ENCODE measurements at regions of chr1 and their contacts with region 1.

Region 1: GRCh38 chr1:149886396-149887195 is 12.8 kb upstream of the BOLA1 start:
- DNase-seq: peak; percentile 98
- ATAC-seq: peak; percentile 73
- H3K4me3 ChIP-seq: peak overlapping the region; percentile 84 to 97 (median 92)
- H3K4me3 Mint-ChIP-seq: no peak overlapping the region
- H3K27ac ChIP-seq: peak overlapping the region; percentile 89 to 94
- H3K27ac Mint-ChIP-seq: no peak overlapping the region
- H3K4me1 ChIP-seq: peaks cover 23 to 33% of the 10 kb centered on the region in 2 donors
- H3K4me1 Mint-ChIP-seq: peaks cover 11% of the 10 kb centered on the region
- H3K27me3 ChIP-seq: no peaks in the 10 kb centered on the region
- H3K27me3 Mint-ChIP-seq: no peaks in the 10 kb centered on the region
- CTCF ChIP-seq: no peak

Region 2: GRCh38 chr1:149844101-149844500 is 42.5 kb before region 1 on chr1:
- CTCF ChIA-PET with region 1: interaction called, 5 read pairs
- POLR2A ChIA-PET with region 1: interaction called, 51 read pairs
- intact Hi-C with region 1: no loop called
- DNase-seq: peak; percentile 6
- ATAC-seq: no peak
- H3K4me3 ChIP-seq: peak overlapping the region; percentile 43 to 83 (median 79)
- H3K4me3 Mint-ChIP-seq: peak overlapping the region; percentile 94
- H3K27ac ChIP-seq: peak overlapping the region; percentile 30 to 71
- H3K27ac Mint-ChIP-seq: peak overlapping the region; percentile 89
- H3K4me1 ChIP-seq: peaks cover 47 to 49% of the 10 kb centered on the region in 2 donors
- H3K4me1 Mint-ChIP-seq: peaks cover 48% of the 10 kb centered on the region
- H3K27me3 ChIP-seq: no peaks in the 10 kb centered on the region
- H3K27me3 Mint-ChIP-seq: no peaks in the 10 kb centered on the region
- CTCF ChIP-seq: no peak

Region 3: DNA sequence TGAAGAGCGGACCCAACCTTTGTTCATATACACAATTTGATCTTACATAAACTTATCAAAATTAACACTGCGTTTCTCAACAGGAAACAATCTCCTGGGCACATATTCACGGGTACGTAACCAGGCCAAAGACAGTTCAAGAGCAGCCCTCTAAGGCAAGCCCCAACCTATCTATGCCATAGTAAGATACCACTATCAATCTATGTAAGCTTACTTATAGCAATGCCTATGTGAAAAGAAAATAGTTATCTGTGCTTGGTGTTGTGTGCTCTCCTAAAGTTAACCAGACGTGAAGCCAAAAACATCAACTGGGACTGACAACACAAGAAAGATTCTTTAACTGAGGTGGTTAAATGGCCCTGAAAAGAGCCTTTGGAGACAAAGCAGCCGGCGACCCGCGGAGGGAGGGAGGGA is 36.6 kb before region 1 on chr1:
- CTCF ChIA-PET with region 1: interaction called, 5 read pairs
- POLR2A ChIA-PET with region 1: interaction called, 51 read pairs
- intact Hi-C with region 1: no loop called
- DNase-seq: peak; percentile 46
- ATAC-seq: no peak
- H3K4me3 ChIP-seq: peak overlapping the region; percentile 56 to 98 (median 70)
- H3K4me3 Mint-ChIP-seq: peak overlapping the region; percentile 95
- H3K27ac ChIP-seq: peak overlapping the region; percentile 59 to 81
- H3K27ac Mint-ChIP-seq: peak overlapping the region; percentile 94
- H3K4me1 ChIP-seq: peaks cover 43% of the 10 kb centered on the region in 2 donors
- H3K4me1 Mint-ChIP-seq: peaks cover 45% of the 10 kb centered on the region
- H3K27me3 ChIP-seq: no peaks in the 10 kb centered on the region
- H3K27me3 Mint-ChIP-seq: no peaks in the 10 kb centered on the region
- CTCF ChIP-seq: no peak

Region 4: DNA sequence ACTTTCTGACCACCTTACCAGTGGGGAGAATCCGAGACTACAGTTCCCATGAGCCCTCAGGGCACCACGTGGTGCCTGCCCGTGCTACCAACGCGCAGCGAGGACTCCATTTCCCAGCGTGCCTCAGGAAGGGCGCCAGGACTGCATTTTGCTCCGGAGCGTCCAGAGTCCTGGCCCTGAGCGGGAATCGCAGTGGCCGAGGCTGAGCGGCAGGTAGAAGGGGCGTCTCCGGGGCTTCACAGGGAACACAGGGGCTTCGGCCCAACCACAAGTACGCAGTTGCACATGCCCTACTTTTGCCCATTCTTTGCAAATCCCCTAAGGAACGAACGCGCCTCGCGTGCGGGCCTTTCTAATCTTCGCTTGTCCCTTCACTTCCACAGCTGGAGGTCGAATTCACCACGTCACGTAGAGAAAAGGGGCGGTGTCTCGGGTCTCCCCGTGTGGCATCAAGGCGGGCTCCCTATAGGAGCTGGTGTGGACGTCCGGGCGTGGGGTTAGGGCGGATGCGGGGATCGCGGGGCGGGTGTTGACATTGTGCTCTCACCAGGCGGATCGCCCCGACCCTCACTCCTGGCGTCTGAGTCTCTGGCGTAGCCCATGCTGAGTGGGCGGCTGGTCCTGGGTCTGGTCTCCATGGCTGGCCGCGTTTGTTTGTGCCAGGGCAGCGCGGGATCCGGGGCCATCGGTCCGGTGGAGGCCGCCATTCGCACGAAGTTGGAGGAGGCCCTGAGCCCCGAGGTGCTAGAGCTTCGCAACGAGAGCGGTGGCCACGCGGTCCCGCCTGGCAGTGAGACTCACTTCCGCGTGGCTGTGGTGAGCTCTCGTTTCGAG is 13.1 kb after region 1 on chr1 and contains the start of gene BOLA1:
- CTCF ChIA-PET with region 1: interaction called, 3 read pairs
- POLR2A ChIA-PET with region 1: interaction called, 25 read pairs
- intact Hi-C with region 1: loop called (anchors 1 kb)
- DNase-seq: peak; percentile 87
- ATAC-seq: peak; percentile 99
- H3K4me3 ChIP-seq: peak within 1 kb of the TSS; percentile 46 to 97 (median 80)
- H3K4me3 Mint-ChIP-seq: peak within 1 kb of the TSS; percentile 92
- H3K27ac ChIP-seq: peak within 1 kb of the TSS; percentile 49 to 67
- H3K27ac Mint-ChIP-seq: peak within 1 kb of the TSS; percentile 95
- H3K4me1 ChIP-seq: peaks cover 9 to 12% of the 10 kb centered on the region in 2 donors
- H3K4me1 Mint-ChIP-seq: peaks cover 15% of the 10 kb centered on the region
- H3K27me3 ChIP-seq: no peaks in the 10 kb centered on the region
- H3K27me3 Mint-ChIP-seq: no peaks in the 10 kb centered on the region
- CTCF ChIP-seq: no peak
- total RNA-seq, gene BOLA1: 15.9 and 16.7 TPM in 2 replicates

Region 5: DNA sequence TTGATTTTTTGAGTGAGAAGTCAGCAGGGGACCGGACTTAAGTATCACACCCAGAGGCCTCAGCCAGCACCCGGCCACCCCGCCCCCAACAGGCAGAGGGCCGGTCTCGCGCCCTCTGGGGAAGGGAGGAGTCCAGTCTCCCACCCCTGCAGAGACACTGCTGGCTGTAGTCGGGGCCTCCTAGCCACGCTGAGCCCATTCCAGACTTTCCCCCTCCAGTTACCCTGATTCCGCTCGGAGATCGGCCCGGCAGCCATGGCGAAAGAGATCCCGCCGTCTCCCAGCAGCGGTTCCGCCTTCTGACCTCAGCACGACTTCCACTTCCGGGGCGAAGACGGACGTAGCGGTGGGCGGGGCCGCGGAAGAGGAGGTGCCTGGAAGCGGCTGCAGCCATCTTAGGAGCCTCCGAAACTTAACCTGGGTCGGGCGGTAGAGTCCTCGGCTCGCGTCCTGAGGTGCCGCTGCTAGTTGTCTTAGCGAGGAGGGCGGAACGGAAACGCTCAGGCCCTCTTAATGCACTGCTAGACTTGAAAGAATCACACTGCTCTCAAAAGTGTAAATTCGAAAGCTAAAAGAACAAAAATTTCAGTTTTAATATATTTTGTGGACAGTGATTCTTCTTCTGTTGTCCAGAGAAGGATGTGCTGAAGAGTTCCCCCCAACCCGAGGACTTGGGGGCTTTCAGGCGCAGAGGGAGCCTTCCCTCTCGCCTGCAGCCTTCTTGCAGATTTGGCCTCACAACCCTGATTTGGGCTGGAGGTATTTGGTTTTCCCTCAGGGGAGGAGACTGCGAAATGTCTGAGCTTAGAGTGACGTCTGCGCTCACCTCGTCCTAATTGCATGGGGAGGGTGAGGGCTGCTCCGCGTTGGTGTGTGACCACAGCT is 41.1 kb after region 1 on chr1 and contains the start of gene SF3B4:
- CTCF ChIA-PET with region 1: interaction called, 7 read pairs
- POLR2A ChIA-PET with region 1: interaction called, 37 read pairs
- intact Hi-C with region 1: loop called (anchors 1 kb)
- DNase-seq: peak; percentile 96
- ATAC-seq: peak; percentile 95
- H3K4me3 ChIP-seq: peak within 1 kb of the TSS; percentile 76 to 98 (median 89)
- H3K4me3 Mint-ChIP-seq: peak within 1 kb of the TSS; percentile 98
- H3K27ac ChIP-seq: peak within 1 kb of the TSS; percentile 74 to 90
- H3K27ac Mint-ChIP-seq: peak within 1 kb of the TSS; percentile 97
- H3K4me1 ChIP-seq: peaks cover 17 to 24% of the 10 kb centered on the region in 2 donors
- H3K4me1 Mint-ChIP-seq: peaks cover 38% of the 10 kb centered on the region
- H3K27me3 ChIP-seq: peaks cover 0 to 2% (median 0%) of the 10 kb centered on the region in 4 experiments
- H3K27me3 Mint-ChIP-seq: peaks cover 20% of the 10 kb centered on the region
- CTCF ChIP-seq: no peak
- total RNA-seq, gene SF3B4: 59.7 and 60.1 TPM in 2 replicates

Region 6: GRCh38 chr1:150171801-150172200 is 285.2 kb after region 1 on chr1:
- CTCF ChIA-PET with region 1: no interaction called
- POLR2A ChIA-PET with region 1: no interaction called
- intact Hi-C with region 1: no loop called
- DNase-seq: no peak
- ATAC-seq: no peak
- H3K4me3 ChIP-seq: no peak overlapping the region
- H3K4me3 Mint-ChIP-seq: no peak overlapping the region
- H3K27ac ChIP-seq: no peak overlapping the region
- H3K27ac Mint-ChIP-seq: no peak overlapping the region
- H3K4me1 ChIP-seq: peaks cover 5 to 8% of the 10 kb centered on the region in 2 donors
- H3K4me1 Mint-ChIP-seq: peaks cover 5% of the 10 kb centered on the region
- H3K27me3 ChIP-seq: no peaks in the 10 kb centered on the region
- H3K27me3 Mint-ChIP-seq: no peaks in the 10 kb centered on the region
- CTCF ChIP-seq: no peak

Region 7: DNA sequence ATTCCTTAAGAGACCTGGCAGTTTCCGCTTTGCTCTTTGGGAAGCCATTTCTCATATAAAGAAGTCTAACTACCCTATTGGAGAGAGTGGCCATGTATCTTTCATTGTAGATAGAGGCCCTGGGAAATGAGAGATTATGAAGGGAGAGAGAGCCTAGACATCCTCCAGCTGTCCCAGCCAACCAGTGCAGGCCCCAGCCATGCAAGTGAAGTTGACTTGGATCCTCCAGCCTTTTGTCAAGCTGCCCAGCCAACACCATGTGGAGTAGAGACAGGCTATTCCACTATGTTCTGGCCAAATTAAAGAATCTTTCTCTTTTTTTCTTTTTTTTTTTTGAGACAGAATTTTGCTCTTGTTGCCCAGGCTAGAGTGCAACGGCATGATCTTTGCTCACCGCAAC is 356.4 kb after region 1 on chr1:
- CTCF ChIA-PET with region 1: no interaction called
- POLR2A ChIA-PET with region 1: no interaction called
- intact Hi-C with region 1: no loop called
- DNase-seq: no peak
- ATAC-seq: no peak
- H3K4me3 ChIP-seq: no peak overlapping the region
- H3K4me3 Mint-ChIP-seq: no peak overlapping the region
- H3K27ac ChIP-seq: no peak overlapping the region
- H3K27ac Mint-ChIP-seq: no peak overlapping the region
- H3K4me1 ChIP-seq: no peaks in the 10 kb centered on the region
- H3K4me1 Mint-ChIP-seq: no peaks in the 10 kb centered on the region
- H3K27me3 ChIP-seq: no peaks in the 10 kb centered on the region
- H3K27me3 Mint-ChIP-seq: no peaks in the 10 kb centered on the region
- CTCF ChIP-seq: no peak